ENCODE measurements at regions of chr6 and their contacts with region 1.

Region 1: DNA sequence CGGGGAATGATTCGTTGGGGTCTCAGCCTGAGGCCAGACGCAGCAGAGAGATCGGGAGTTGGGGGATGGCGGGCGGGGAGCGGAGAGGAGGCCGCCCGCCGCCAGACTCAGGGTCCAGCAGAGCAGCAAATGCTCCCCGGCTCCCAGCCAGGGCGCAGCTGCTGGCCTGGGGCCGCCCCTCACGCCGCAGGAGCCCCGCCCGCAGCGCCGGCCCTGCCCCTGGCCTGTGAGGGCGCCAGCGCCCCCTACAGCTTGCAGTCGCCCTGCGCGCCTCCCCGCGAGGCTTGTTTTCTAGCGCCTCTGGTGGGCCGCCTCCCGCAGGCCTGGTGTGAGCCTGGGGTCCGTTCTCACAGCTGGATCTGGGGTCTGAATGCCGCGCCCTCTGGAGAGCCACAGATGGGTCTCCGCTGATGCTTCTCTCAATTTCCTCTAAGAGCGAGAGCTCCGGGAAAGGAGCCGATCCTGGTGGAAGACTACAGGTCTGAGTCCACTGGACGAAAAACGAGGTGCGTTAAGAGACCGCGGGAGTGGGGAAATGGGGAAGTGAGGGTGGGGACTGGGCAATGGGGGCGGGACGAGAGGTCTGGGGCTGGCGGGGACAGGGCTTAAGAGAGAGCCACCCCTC is 29.9 kb downstream of the TRIM38 start:
- DNase-seq: peak; percentile 99
- H3K4me3 Mint-ChIP-seq: peak overlapping the region; percentile 87
- H3K27ac Mint-ChIP-seq: peak overlapping the region; percentile 82
- H3K4me1 Mint-ChIP-seq: peaks cover 14% of the 10 kb centered on the region
- H3K27me3 Mint-ChIP-seq: no peaks in the 10 kb centered on the region
- CTCF ChIP-seq: peak; percentile 94

Region 2: DNA sequence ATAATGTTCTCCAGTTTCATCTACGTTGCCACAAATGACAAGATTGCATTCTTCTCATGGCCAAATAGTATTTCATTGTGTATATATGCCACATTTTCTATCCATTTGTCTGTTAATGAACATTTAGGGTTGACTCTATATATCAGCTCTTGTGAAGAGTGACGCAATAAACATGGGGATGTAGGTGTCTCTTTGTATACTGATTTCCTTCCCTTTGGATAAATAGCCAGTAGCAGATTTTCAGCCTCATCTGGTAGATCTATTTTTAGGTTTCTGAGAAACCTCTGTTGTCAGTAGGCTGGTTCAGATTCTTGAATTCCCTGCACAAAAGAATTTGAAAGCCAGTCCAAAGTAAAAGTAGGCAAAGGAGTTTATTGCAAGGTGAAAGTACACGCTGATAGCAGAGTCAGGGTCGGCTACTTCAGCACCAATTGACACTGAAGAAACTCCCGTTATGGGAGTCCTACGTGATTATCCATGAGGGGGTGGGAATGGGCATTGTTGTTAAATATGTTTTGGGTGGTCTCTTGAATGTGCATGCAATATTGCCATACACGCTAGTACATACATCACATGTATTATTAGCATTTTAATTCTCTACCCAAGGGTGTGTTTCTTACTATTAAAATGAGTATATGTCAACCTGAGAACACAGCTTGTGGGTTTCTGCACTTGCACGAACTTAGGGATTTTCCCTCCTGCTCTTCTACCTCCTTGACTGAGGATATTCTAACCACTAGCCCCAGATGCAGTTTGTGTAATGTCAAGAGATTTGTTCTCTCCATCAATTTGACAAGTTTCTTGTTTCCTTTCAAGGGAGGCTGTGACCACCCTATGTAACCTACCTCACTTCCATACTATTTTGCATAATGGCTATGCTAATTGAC is 47.6 kb before region 1 on chr6:
- CTCF ChIA-PET with region 1: no interaction called
- intact Hi-C with region 1: no loop called
- DNase-seq: no peak
- H3K4me3 Mint-ChIP-seq: no peak overlapping the region
- H3K27ac Mint-ChIP-seq: no peak overlapping the region
- H3K4me1 Mint-ChIP-seq: no peaks in the 10 kb centered on the region
- H3K27me3 Mint-ChIP-seq: no peaks in the 10 kb centered on the region
- CTCF ChIP-seq: no peak

Region 3: GRCh38 chr6:26017632-26017966 is 25.1 kb after region 1 on chr6:
- CTCF ChIA-PET with region 1: interaction called, 24 read pairs
- intact Hi-C with region 1: no loop called
- DNase-seq: peak; percentile 80
- H3K4me3 Mint-ChIP-seq: peak overlapping the region; percentile 84
- H3K27ac Mint-ChIP-seq: peak overlapping the region; percentile 87
- H3K4me1 Mint-ChIP-seq: no peaks in the 10 kb centered on the region
- H3K27me3 Mint-ChIP-seq: no peaks in the 10 kb centered on the region
- CTCF ChIP-seq: peak; percentile 23

Region 4: DNA sequence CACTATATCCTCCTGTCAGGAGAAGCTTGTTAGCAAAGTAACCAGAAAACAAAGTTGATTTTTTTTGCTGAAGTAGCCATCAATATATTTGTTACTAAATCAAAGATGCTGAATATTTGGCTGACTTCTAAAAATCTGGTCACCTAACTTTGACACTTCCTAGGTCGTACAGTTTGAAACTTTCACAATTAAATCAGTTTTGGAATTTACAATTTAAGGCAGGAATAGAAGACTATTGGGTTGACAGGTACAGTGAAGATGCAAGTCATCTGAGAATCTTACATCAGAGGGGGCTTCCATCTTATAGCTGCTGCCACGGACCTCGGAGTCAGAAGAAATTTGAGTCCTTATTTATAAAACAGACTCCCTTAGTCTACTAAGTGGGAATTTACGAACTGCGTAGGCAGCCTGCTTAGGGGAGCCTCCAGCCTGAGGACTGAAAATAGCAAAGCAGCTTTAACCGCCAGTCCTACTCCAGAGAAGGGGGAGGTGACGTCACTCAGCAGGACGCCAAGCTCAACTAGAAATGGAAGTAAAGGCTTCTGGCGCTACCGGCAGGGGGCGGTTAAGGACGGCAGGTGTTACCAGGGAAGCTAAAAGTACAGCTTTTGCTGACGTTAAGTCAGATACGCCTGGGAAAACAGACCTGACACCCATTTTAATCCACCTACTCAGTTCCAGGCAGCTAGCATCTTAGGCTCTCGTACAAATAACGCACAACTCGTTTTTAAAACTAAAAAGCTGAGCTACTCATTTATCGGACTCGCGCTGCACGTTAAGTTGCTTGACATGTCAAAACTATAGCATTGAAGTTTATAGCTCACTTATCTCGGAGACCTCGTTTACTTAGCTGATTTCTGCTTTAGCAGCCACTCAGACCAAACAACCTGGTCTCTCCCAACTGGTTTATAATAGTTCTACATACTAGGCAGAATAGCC is 33.6 kb after region 1 on chr6:
- CTCF ChIA-PET with region 1: interaction called, 10 read pairs
- intact Hi-C with region 1: no loop called
- DNase-seq: peak; percentile 98
- H3K4me3 Mint-ChIP-seq: peak overlapping the region; percentile 80
- H3K27ac Mint-ChIP-seq: peak overlapping the region; percentile 100
- H3K4me1 Mint-ChIP-seq: peaks cover 72% of the 10 kb centered on the region
- H3K27me3 Mint-ChIP-seq: peaks cover 13% of the 10 kb centered on the region
- CTCF ChIP-seq: peak; percentile 93

Measured in Calu3 (cell line).